HEK293T (cell line): ENCODE measurements at regions of chr1 and their contacts with region 1.

Region 1: GRCh38 chr1:153796791-153797659 is 21.8 kb downstream of the SLC27A3 start:
- DNase-seq: peak; percentile 90

Region 2: GRCh38 chr1:153783233-153784190 is 13.5 kb before region 1 on chr1:
- CTCF ChIA-PET with region 1: interaction called, 4 read pairs
- POLR2A ChIA-PET with region 1: interaction called, 16 read pairs
- DNase-seq: peak; percentile 99

Region 3: GRCh38 chr1:154241703-154242351 is 444.8 kb after region 1 on chr1:
- CTCF ChIA-PET with region 1: no interaction called
- POLR2A ChIA-PET with region 1: no interaction called
- DNase-seq: no peak